ENCODE measurements at regions of chr15 and their contacts with region 1.

Region 1: GRCh38 chr15:71575474-71576045 is 234.8 kb upstream of the NR2E3 start:
- DNase-seq: no peak
- ATAC-seq: no peak
- H3K4me3 ChIP-seq: no peak overlapping the region
- H3K27ac ChIP-seq: no peak overlapping the region
- H3K4me1 ChIP-seq: peaks cover 2% of the 10 kb centered on the region
- H3K27me3 ChIP-seq: no peaks in the 10 kb centered on the region

Region 2: GRCh38 chr15:71443538-71443937 is 132.0 kb before region 1 on chr15:
- intact Hi-C with region 1: no loop called
- DNase-seq: peak; percentile 59 to 84 (median 73)
- ATAC-seq: no peak
- H3K4me3 ChIP-seq: no peak overlapping the region
- H3K27ac ChIP-seq: no peak overlapping the region
- H3K4me1 ChIP-seq: no peaks in the 10 kb centered on the region
- H3K27me3 ChIP-seq: no peaks in the 10 kb centered on the region

Region 3: GRCh38 chr15:71730277-71731144 is 155.0 kb after region 1 on chr15:
- intact Hi-C with region 1: loop called in 1 of 4 experiments (anchors 5 kb)
- DNase-seq: peak in 2 of 3 donors; percentile 41 to 72
- ATAC-seq: peak; percentile 86
- H3K4me3 ChIP-seq: no peak overlapping the region
- H3K27ac ChIP-seq: no peak overlapping the region
- H3K4me1 ChIP-seq: no peaks in the 10 kb centered on the region
- H3K27me3 ChIP-seq: no peaks in the 10 kb centered on the region

Measured in right cardiac atrium (tissue), 5 donors.